Astrocyte of the spinal cord (primary cell): ENCODE measurements at regions of chr11 and their contacts with region 1.

Region 1: GRCh38 chr11:130861902-130862860 is 54.1 kb downstream of the SNX19 start:
- DNase-seq: peak; percentile 95
- H3K4me3 ChIP-seq: no peak overlapping the region
- CTCF ChIP-seq: peak; percentile 99

Region 2: GRCh38 chr11:130434521-130435223 is 427.5 kb before region 1 on chr11:
- in situ Hi-C with region 1: loop called (anchors 25 kb)
- DNase-seq: peak; percentile 87
- H3K4me3 ChIP-seq: peak overlapping the region; percentile 60
- CTCF ChIP-seq: peak; percentile 89

Region 3: DNA sequence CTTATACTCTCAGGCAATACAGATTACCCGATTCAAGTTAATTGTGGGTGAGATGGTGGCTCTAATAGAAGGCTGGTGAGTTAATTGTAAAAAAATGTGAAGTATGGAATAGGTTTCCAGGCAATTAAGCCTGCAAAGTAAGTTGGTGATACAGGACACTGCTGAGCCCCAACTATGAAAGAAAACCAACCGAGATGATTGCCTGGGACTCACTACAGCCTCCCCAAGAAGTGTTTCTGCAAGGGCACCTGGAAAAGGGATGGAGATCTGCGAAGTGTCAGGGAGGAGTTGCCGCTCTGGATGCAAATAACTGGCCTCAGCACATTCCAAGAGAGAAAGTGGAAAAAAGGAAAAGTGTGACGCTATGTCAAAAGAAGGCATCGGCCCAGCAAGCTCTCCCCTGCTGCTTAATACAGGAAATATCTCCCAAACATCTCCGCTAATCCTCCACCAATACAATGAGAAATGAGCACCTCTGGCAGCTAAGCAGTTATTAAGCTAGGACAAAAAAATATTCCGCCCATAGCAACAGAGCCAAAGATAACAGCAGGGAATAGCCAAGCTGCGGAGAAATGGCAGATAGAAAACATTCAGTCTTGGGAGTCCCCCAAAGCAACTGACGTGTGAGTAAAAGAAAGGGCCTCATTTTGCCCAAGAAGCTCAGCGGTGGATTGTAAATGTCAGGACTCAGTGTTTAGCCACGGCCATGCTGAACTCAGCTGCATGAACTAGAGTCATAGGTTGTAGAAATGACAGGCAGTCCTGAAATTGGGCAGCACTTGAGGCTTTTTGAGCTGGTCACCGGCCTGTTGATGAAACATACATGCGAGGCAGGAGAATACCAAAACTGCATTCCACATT is 79.6 kb before region 1 on chr11:
- in situ Hi-C with region 1: no loop called
- DNase-seq: peak; percentile 88
- H3K4me3 ChIP-seq: no peak overlapping the region
- CTCF ChIP-seq: no peak

Region 4: GRCh38 chr11:130904380-130904779 is 42.2 kb after region 1 on chr11:
- in situ Hi-C with region 1: no loop called
- DNase-seq: peak; percentile 24
- H3K4me3 ChIP-seq: no peak overlapping the region
- CTCF ChIP-seq: peak; percentile 47